Esophagus muscularis mucosa (tissue), 4 donors: ENCODE measurements at regions of chr3 and their contacts with region 1.

Region 1: DNA sequence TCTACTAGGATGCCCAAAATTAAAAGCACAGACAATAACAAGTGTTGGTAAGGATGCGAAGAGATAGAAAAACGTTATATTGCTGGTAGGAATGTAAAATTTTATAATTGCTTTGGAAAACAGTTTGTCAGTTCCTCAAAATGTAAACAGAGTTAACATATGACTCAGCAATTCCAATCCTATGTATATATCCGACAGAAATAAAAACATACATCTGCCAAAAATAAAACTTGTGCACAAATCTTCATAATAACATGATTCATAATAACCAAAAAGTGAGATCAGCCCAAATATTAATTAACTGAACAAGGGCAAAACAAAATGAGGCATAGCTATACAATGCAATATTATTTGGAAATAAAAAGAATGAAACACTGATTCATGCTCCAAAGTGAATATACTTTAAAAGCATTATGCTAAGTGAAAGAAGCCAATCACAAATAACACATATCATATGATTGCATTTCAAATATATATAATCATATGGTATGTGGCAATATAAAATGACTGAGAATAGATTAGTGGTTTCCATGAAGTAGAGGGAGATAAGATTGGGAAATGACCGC is 609.3 kb downstream of the IGSF11 start:
- DNase-seq: no peak
- H3K4me3 ChIP-seq: no peak overlapping the region
- H3K27ac ChIP-seq: no peak overlapping the region
- H3K4me1 ChIP-seq: no peaks in the 10 kb centered on the region
- H3K27me3 ChIP-seq: no peaks in the 10 kb centered on the region
- CTCF ChIP-seq: no peak
- EP300 ChIP-seq: no peak
- POLR2A ChIP-seq: no peak

Region 2: GRCh38 chr3:118785415-118785814 is 360.1 kb after region 1 on chr3:
- intact Hi-C with region 1: loop called (anchors 5 kb)
- DNase-seq: no peak
- H3K4me3 ChIP-seq: no peak overlapping the region
- H3K27ac ChIP-seq: no peak overlapping the region
- H3K4me1 ChIP-seq: no peaks in the 10 kb centered on the region
- H3K27me3 ChIP-seq: no peaks in the 10 kb centered on the region
- CTCF ChIP-seq: no peak
- EP300 ChIP-seq: no peak
- POLR2A ChIP-seq: no peak